Activated CD4-positive, alpha-beta T cell treated with anti-CD3 and anti-CD28 coated beads for 36 hours (primary cell): ENCODE measurements at regions of chr4 and their contacts with region 1.

Region 1: DNA sequence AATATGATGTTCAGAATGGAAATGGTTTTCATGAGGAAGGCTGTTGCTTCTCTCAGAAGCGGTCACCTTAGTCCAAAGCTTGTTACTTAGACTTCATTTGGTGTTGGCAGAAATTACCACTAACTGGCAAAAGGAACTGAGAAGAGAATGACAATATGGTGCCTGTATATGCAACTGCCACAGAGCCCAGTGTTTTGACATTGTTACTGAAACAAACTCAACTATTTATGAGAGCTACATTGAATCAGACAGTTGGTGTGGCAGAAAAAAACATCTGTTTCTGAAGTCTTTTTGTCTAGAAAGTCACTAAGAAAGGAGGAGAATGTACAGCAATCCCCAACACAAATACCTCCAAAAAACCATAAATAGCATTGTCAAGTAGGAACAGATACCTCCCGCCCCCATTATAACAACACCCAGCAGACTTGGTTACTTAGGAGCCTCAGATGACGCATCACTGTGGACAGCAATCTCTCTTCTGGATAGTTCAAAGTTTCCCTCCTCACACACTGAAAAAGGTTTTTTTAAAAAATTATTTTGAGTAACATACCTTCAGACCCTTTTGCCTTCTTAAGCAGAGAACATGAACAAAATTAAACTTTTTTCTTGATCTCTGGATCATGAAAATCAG is 92.2 kb downstream of the MAML3 start:
- DNase-seq: peak; percentile 32
- ATAC-seq: peak; percentile 87
- H3K4me3 Mint-ChIP-seq: no peak overlapping the region
- H3K27ac Mint-ChIP-seq: no peak overlapping the region
- H3K4me1 Mint-ChIP-seq: peaks cover 25% of the 10 kb centered on the region
- H3K27me3 Mint-ChIP-seq: peaks cover 16% of the 10 kb centered on the region

Region 2: GRCh38 chr4:140071806-140072205 is 10.0 kb after region 1 on chr4:
- CTCF ChIA-PET with region 1: interaction called, 8 read pairs
- POLR2A ChIA-PET with region 1: no interaction called
- intact Hi-C with region 1: loop called in 1 of 2 experiments (anchors 1 kb)
- DNase-seq: peak; percentile 85
- ATAC-seq: peak; percentile 85
- H3K4me3 Mint-ChIP-seq: peak overlapping the region; percentile 29
- H3K27ac Mint-ChIP-seq: peak overlapping the region; percentile 56
- H3K4me1 Mint-ChIP-seq: peaks cover 44% of the 10 kb centered on the region
- H3K27me3 Mint-ChIP-seq: peaks cover 15% of the 10 kb centered on the region

Region 3: DNA sequence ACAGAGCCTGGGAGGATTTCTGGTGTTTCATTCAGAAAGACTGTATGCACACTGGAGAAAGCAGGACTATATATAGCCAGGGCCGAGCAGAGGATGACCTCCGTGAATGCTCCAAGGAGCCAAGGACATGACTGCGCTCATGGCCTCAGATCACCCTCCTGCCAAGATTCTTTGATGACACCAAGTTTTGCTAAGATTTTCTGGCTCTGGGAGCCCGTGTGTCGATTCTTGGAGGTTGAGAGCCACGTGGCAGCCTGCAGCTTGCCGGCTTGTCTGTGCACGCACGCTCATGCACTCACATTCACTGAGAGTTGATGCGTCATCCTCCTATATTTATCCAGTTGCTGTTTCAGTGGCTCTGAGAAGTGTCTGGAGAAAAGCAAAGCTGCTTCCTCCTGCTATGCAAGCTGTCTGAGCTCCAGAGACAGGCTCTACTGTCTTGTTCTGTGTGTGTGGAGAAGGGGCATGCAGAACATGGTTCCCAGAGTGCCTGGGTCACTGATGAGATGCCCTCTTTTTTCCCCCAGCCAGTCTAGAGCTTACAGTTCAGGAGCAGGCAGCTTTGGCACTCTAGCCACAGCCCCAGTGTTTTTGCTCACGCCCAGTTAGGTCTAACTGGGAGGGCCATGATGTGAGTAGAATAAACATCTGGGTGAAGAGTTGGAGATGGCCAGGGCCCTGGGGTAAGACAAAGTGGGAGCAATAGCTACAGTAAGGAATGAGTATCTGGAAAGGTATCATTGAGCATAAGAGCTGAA is 246.8 kb after region 1 on chr4:
- CTCF ChIA-PET with region 1: no interaction called
- POLR2A ChIA-PET with region 1: no interaction called
- intact Hi-C with region 1: no loop called
- DNase-seq: no peak
- ATAC-seq: no peak
- H3K4me3 Mint-ChIP-seq: no peak overlapping the region
- H3K27ac Mint-ChIP-seq: no peak overlapping the region
- H3K4me1 Mint-ChIP-seq: no peaks in the 10 kb centered on the region
- H3K27me3 Mint-ChIP-seq: no peaks in the 10 kb centered on the region